Mammary epithelial cell (primary cell): ENCODE measurements at regions of chr16 and their contacts with region 1.

Region 1: DNA sequence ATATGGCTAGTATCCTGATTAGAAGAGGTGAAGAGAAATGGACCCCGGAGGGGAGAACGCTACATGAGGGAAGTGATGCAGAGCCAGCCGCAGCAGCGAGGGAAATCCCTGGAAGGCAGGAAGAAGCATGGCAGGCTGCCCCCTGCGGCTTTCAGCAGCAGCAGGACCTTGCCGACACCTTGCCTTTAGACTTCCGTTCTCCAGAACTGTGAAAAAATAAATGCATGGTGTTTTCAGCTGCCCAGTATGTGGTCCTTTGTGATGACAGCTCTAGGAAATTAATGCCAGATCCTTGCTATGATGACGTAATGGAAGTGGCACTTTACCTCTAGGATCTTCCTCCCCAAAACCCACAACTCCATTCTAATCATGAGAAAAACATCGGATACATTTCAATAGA is 9.7 kb upstream of the ZFP1 start:
- DNase-seq: no peak
- H3K4me3 ChIP-seq: no peak overlapping the region
- H3K27ac ChIP-seq: no peak overlapping the region
- H3K4me1 ChIP-seq: no peaks in the 10 kb centered on the region
- H3K27me3 ChIP-seq: no peaks in the 10 kb centered on the region
- CTCF ChIP-seq: no peak

Region 2: DNA sequence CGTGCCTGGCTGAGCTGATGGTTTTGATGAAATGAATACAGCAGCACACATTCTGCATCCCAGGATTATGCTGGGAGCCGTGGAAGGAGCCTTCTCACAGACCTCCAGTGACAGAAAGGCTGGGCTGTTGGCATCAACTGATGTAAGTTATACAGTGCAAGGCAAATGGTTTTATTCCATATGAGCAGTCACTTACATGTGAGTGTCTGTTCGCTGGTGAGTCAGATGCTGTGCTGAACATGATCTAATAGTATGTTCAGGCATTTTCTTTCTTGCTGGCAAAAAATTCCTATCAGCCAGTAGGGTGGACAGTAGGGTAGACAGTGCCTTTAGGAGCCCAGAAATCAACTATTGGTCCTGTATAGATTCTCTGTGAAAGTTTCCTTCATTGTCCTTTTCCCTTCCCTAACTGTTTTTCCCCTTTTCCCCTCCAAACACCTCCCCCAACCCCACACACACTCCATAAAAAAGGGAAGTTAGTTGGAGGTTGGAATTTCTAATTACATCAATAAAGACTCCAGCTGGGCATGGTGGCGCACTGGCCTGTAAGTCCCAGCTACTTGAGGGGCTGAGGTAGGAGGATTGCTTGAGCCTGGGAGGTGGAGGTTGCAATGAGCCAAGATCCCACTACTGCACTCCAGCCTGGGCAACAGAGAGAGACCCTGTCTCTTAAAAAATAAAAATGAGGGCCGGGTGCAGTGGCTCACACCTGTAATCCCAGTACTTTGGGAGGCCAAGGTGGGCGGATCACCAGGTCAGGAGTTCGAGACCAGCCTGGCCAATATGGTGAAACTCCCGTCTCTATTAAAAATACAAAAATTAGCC is 58.2 kb before region 1 on chr16:
- CTCF ChIA-PET with region 1: no interaction called
- dilution Hi-C with region 1: loop called (anchors 5 kb)
- in situ Hi-C with region 1: no loop called
- intact Hi-C with region 1: no loop called
- DNase-seq: peak; percentile 27
- H3K4me3 ChIP-seq: no peak overlapping the region
- H3K27ac ChIP-seq: no peak overlapping the region
- H3K4me1 ChIP-seq: no peaks in the 10 kb centered on the region
- H3K27me3 ChIP-seq: no peaks in the 10 kb centered on the region
- CTCF ChIP-seq: no peak

Region 3: GRCh38 chr16:75181630-75182029 is 43.0 kb after region 1 on chr16:
- CTCF ChIA-PET with region 1: no interaction called
- dilution Hi-C with region 1: loop called (anchors 5 kb)
- in situ Hi-C with region 1: no loop called
- intact Hi-C with region 1: no loop called
- DNase-seq: no peak
- H3K4me3 ChIP-seq: no peak overlapping the region
- H3K27ac ChIP-seq: no peak overlapping the region
- H3K4me1 ChIP-seq: no peaks in the 10 kb centered on the region
- H3K27me3 ChIP-seq: no peaks in the 10 kb centered on the region
- CTCF ChIP-seq: no peak